Mammary epithelial cell (primary cell): ENCODE measurements at regions of chrX and their contacts with region 1.

Region 1: GRCh38 chrX:13658602-13659001 is 5.7 kb downstream of the TCEANC start:
- DNase-seq: peak; percentile 51
- H3K4me3 ChIP-seq: no peak overlapping the region
- H3K27ac ChIP-seq: peak overlapping the region; percentile 76
- H3K4me1 ChIP-seq: peaks cover 16% of the 10 kb centered on the region
- H3K27me3 ChIP-seq: no peaks in the 10 kb centered on the region
- CTCF ChIP-seq: peak; percentile 74 to 75

Region 2: GRCh38 chrX:13506574-13506973 is 152.0 kb before region 1 on chrX:
- CTCF ChIA-PET with region 1: no interaction called
- dilution Hi-C with region 1: no loop called
- in situ Hi-C with region 1: no loop called
- intact Hi-C with region 1: no loop called
- DNase-seq: peak; percentile 18
- H3K4me3 ChIP-seq: no peak overlapping the region
- H3K27ac ChIP-seq: no peak overlapping the region
- H3K4me1 ChIP-seq: no peaks in the 10 kb centered on the region
- H3K27me3 ChIP-seq: no peaks in the 10 kb centered on the region
- CTCF ChIP-seq: peak; percentile 82 to 83

Region 3: GRCh38 chrX:13669246-13669737 is 10.7 kb after region 1 on chrX:
- CTCF ChIA-PET with region 1: no interaction called
- dilution Hi-C with region 1: no loop called
- in situ Hi-C with region 1: no loop called
- intact Hi-C with region 1: loop called (anchors 1 kb)
- DNase-seq: peak; percentile 99
- H3K4me3 ChIP-seq: no peak overlapping the region
- H3K27ac ChIP-seq: peak overlapping the region; percentile 73
- H3K4me1 ChIP-seq: peaks cover 23% of the 10 kb centered on the region
- H3K27me3 ChIP-seq: no peaks in the 10 kb centered on the region
- CTCF ChIP-seq: no peak

Region 4: GRCh38 chrX:13734278-13735172 is 75.9 kb after region 1 on chrX and contains the starts of genes OFD1 and TRAPPC2:
- CTCF ChIA-PET with region 1: interaction called, 3 read pairs
- dilution Hi-C with region 1: no loop called
- in situ Hi-C with region 1: no loop called
- intact Hi-C with region 1: loop called (anchors 1 kb)
- DNase-seq: peak; percentile 97
- H3K4me3 ChIP-seq: peak within 1 kb of the TSS; percentile 78 to 95 (median 92)
- H3K27ac ChIP-seq: peak within 1 kb of the TSS; percentile 92
- H3K4me1 ChIP-seq: peaks cover 13% of the 10 kb centered on the region
- H3K27me3 ChIP-seq: no peaks in the 10 kb centered on the region
- CTCF ChIP-seq: peak in 1 of 2 donors; percentile 8
- total RNA-seq, gene OFD1: 39.3 to 42.0 TPM
- total RNA-seq, gene TRAPPC2: 25.3 to 31.2 TPM